ENCODE measurements at regions of chrX and their contacts with region 1.

Region 1: DNA sequence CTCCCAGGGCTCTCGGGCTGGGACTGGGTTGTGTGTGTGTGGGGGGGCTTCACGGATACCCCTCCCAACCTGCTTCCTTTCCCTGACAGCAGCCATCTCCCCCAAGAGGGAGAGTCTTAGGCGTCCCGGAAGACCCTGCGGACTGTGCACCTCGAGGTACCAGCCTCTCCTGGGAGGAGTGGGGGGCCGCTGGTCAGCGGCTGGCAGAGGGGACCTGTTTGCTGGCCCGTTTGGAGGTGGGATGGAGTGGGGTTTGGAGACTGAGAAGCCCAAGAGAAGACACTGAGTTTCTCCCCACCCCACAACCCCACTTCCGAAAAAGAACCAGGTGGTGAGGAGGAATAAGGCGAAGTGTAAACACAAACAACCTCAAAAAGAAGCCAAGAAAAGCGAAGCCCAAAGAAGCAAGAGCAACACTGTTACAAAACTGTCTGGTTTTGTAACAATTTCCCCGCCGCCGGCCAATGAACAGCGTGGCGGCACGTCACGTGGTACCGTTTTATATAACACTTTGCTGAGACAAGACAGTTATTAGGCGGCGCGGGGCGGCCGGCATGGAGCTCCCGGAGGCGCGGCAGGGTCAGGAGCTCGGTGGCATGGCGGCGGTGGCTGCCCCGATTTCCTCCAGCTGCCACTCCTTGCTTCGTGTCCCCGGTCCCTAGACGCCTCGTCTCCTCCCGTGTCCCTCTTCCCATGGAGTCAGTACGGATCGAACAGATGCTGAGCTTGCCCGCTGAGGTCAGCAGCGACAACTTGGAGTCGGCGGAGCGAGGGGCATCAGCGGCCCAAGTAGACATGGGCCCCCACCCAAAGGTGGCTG is at the start of gene LONRF3:
- DNase-seq: peak; percentile 37 to 78 (median 56)
- ATAC-seq: peak; percentile 55 to 59
- H3K4me3 Mint-ChIP-seq: peak within 1 kb of the TSS; percentile 84 to 96 (median 94)
- H3K27ac Mint-ChIP-seq: peak within 1 kb of the TSS; percentile 53 to 95 (median 90)
- H3K4me1 Mint-ChIP-seq: peaks cover 7 to 27% (median 20%) of the 10 kb centered on the region in 4 donors
- H3K27me3 Mint-ChIP-seq: peaks cover 0 to 13% (median 8%) of the 10 kb centered on the region in 5 donors
- polyA plus RNA-seq, gene LONRF3: 0.41 to 1.5 (median 0.68) TPM

Region 2: GRCh38 chrX:118990512-118991227 is 16.4 kb after region 1 on chrX:
- POLR2A ChIA-PET with region 1: interaction called, 16 read pairs
- DNase-seq: no peak
- ATAC-seq: no peak
- H3K4me3 Mint-ChIP-seq: no peak overlapping the region
- H3K27ac Mint-ChIP-seq: peak overlapping the region in 4 of 10 donors; percentile 2 to 79 (median 51)
- H3K4me1 Mint-ChIP-seq: peaks cover 14 to 29% (median 24%) of the 10 kb centered on the region in 4 donors
- H3K27me3 Mint-ChIP-seq: peaks cover 0 to 4% (median 0%) of the 10 kb centered on the region in 5 donors

Region 3: DNA sequence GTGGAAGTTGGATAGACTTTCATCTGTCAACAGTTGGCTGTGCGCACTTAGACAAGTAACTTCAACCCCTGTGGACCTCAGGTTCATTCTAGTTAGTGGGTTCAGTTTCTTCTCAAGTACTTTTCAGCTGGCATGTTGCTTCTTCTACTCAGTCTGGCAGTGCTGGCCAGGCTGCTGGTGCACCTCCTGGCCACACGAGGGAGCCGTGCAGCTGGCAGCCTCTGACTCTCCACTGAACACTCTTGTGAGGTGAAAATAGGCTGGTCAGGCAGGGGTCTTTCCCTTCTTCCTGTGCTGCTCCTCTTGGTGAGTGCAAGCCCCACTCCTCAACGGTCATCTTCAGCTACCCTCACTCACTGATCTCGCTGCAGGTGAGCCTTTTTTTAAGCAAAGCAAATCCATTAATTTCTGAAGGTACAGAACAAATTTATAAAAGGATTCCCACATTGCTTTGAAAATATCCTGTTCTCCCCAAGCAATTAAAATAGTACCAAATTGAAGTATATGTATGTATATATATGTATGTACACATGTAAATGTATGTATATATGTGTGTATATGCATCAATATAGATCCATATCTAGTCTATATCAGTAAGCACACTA is 30.7 kb after region 1 on chrX:
- POLR2A ChIA-PET with region 1: interaction called, 10 read pairs
- DNase-seq: peak in 9 of 10 donors; percentile 12 to 45 (median 31)
- ATAC-seq: peak; percentile 73 to 74
- H3K4me3 Mint-ChIP-seq: no peak overlapping the region
- H3K27ac Mint-ChIP-seq: peak overlapping the region in 1 of 10 donors; percentile 25
- H3K4me1 Mint-ChIP-seq: peaks cover 3 to 25% (median 15%) of the 10 kb centered on the region in 4 donors
- H3K27me3 Mint-ChIP-seq: no peaks in the 10 kb centered on the region

Measured in naive thymus-derived CD8-positive, alpha-beta T cell (primary cell).